Dorsolateral prefrontal cortex (tissue), 120 donors: ENCODE measurements at regions of chr6 and their contacts with region 1.

Region 1: DNA sequence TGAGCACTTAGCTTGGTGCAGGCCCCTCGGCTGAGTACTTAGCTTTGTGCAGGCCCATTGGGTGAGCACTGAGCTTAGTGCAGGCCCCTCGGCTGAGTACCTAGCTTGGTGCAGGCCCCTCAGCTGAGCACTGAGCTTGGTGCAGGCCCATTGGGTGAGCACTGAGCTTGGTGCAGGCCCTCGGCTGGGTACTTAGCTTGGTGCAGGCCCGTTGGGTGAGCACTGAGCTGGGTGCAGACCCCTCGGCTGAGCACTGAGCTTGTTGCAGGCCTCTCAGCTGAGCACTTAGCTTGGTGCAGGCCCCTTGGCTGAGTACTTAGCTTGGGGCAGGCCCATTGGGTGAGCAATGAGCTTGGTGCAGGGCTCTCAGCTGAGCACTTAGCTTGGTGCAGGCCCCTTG is 387.1 kb downstream of the THBS2 start:
- DNase-seq: no peak
- H3K4me3 ChIP-seq: no peak overlapping the region
- H3K27ac ChIP-seq: peak overlapping the region in 13 of 59 donors; percentile 74 to 94 (median 90)
- H3K27me3 ChIP-seq: peaks cover 0 to 4% (median 0%) of the 10 kb centered on the region in 45 donors
- CTCF ChIP-seq: no peak

Region 2: GRCh38 chr6:168724669-168725570 is 141.6 kb before region 1 on chr6:
- intact Hi-C with region 1: no loop called
- DNase-seq: no peak
- H3K4me3 ChIP-seq: no peak overlapping the region
- H3K27ac ChIP-seq: no peak overlapping the region
- H3K27me3 ChIP-seq: no peaks in the 10 kb centered on the region
- CTCF ChIP-seq: no peak

Region 3: GRCh38 chr6:168791917-168792316 is 74.6 kb before region 1 on chr6:
- intact Hi-C with region 1: loop called (anchors 5 to 10 kb)
- DNase-seq: peak in 8 of 10 donors; percentile 50 to 86 (median 73)
- H3K4me3 ChIP-seq: peak overlapping the region in 3 of 59 donors; percentile 0 to 13 (median 6)
- H3K27ac ChIP-seq: peak overlapping the region in 26 of 59 donors; percentile 8 to 79 (median 62)
- H3K27me3 ChIP-seq: peaks cover 0 to 3% (median 0%) of the 10 kb centered on the region in 45 donors
- CTCF ChIP-seq: peak in 10 of 56 donors; percentile 11 to 44 (median 24)